ENCODE measurements at regions of chr6 and their contacts with region 1.

Region 1: DNA sequence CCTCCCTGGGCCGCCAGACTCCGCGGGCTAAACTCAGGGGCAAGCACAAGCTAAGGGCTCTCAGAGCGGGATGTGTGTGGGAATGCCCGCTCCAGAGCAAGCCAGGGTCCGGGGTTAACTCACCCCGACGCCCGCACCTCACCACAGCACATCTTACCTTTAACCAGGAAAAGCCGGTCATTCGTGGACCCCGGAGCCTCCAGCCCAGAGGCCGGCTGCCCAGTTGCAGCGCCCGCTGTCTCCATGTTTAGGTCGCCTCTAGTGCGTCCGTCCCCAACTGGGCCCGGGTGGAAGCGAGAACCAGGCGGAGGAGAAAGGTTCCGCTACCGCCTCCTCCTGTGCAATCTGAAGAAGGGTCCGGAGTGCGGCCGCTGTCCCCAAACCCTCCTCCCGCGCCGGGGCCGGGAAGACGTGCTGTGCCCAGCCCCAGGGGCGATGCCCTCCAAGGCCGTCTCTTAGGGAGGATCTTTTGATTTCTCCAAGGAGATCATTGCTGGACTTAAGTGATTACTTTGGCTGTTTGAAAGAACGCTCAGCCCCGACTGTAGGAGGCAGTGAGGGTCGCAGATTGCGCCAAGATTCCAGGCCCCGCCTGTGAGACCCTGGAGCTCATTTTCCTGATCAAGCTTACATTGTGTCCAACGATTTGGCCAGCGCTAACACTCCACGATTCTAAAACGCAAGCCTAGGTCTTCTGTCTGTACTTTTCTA is at the start of gene TMEM242:
- DNase-seq: peak; percentile 93
- ATAC-seq: peak; percentile 99
- H3K4me3 ChIP-seq: peak within 1 kb of the TSS; percentile 92
- H3K27ac ChIP-seq: peak within 1 kb of the TSS; percentile 92
- H3K4me1 ChIP-seq: peaks cover 15% of the 10 kb centered on the region
- H3K27me3 ChIP-seq: no peaks in the 10 kb centered on the region
- CTCF ChIP-seq: peak; percentile 15
- total RNA-seq, gene TMEM242: 10.9 TPM

Region 2: DNA sequence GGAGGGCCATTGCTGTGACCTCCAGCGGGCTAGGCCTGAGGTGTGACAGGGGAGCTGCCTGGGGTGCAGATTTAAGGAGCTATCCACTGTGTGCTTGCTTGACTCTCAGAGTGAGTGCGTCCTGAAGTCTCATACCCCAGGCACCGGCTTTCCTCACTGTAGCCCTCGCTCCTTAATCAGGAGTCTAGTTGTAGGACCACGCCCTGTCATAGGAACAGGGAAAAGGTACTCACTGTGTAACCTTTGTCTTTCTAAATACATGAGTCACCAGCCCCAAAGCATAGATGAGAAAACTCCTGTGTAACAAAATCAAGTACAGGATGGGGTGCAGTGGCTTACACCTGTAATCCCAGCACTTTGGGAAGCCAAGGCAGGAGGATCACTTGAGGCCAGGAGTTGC is 141.8 kb before region 1 on chr6:
- intact Hi-C with region 1: no loop called
- DNase-seq: no peak
- ATAC-seq: no peak
- H3K4me3 ChIP-seq: no peak overlapping the region
- H3K27ac ChIP-seq: no peak overlapping the region
- H3K4me1 ChIP-seq: peaks cover 7% of the 10 kb centered on the region
- H3K27me3 ChIP-seq: no peaks in the 10 kb centered on the region
- CTCF ChIP-seq: no peak

Region 3: DNA sequence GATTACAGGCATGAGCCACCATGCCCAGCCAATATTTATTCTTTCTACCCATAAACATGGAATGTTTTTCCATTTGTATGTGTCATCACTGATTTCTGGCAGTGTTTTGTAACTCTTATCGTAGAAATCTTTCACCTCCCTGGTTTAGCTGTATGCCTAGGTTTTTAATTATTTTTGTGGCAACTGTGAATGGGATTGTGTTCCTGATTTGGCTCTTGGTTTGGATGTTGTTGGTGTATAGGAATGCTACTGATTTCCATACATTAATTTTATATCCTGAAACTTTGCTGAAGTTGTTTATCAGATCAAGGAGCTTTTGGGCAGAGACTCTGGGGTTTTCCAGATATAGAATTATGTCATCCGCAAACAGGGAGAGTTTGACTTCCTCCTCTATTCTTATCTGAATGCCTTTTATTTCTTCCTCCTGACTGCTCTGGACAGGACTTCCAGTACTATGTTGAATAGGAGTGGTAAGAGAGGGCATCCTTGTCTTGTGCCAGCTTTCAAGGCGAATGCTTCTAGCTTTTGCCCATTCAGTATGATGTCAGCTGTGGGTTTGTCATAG is 256.1 kb after region 1 on chr6:
- intact Hi-C with region 1: loop called (anchors 10 kb)
- DNase-seq: no peak
- ATAC-seq: peak in 1 of 2 donors; percentile 16
- H3K4me3 ChIP-seq: no peak overlapping the region
- H3K27ac ChIP-seq: no peak overlapping the region
- H3K4me1 ChIP-seq: no peaks in the 10 kb centered on the region
- H3K27me3 ChIP-seq: no peaks in the 10 kb centered on the region
- CTCF ChIP-seq: no peak